GM10248 (cell line): ENCODE measurements at regions of chr6 and their contacts with region 1.

Region 1: DNA sequence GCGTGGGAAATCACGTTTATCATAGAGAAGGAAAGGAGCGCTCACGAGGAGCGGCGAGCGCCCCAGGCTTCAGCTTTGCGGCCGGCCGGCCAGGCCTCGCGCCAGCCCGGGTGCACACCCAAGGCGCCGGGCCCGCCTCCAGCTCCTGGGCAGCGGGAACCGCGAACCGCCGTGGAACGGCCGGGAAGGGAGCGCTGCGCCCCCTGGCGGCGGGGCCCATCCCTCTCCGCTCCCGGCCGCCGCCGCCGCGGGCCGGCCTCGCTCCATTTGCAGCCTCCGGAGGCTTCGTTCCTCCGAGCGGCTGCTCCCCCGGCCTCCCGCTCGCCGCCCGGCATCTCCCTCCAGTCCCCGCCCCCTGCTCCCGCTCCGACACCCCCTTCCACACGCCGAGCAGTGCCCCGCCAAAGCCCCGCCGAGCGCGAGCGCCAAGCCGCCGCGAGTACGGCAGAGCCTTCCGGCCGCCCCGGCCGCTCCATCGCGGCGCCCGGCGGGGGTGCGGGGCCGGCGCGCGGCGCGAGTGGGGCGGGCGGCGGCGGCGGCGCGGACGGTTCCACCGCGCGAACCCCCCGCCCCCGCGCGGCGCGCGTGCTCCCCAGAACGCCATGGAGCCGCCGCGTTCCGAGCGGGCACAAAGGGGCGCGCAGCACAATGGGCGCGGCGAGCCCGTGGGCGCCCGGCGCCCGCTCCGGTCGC is 956 bp downstream of the BEND3 start:
- DNase-seq: peak; percentile 89
- CTCF ChIP-seq: peak; percentile 82

Region 2: DNA sequence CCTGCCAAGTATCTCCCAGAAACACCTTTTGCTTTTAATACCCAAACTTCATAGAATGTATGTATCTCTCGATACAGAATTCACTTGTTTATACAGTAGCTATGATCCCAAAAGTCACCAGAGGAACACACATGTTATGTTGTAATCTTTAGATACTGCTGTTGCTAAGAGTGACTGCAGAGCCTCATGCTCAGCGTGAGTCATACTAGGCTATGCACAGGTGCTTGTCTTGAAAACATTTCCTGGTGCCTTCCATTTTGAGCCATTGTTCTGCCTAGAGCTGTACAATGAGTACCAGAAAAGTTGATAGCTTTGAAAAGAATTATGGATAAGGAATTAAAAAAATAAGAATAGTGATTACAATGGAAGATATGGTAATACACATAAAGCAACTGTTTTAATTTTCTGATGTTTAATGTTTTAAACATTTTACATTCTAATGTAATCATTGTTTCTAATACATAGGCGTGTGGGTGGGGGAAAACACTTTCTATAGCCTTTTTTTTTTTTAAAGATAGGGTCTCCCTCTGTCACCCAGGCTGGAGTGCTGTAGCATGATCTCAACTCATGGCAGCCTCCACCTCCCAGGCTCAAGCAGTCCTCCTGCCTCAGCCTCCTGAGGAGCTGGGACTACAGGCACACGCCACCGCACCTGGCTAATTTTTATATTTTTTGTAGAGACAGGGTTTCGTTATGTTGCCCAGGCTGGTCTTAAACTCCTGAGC is 219.2 kb before region 1 on chr6:
- CTCF ChIA-PET with region 1: no interaction called
- POLR2A ChIA-PET with region 1: no interaction called
- DNase-seq: no peak
- CTCF ChIP-seq: no peak

Region 3: GRCh38 chr6:107021446-107022185 is 92.7 kb before region 1 on chr6:
- CTCF ChIA-PET with region 1: no interaction called
- POLR2A ChIA-PET with region 1: no interaction called
- DNase-seq: no peak
- CTCF ChIP-seq: no peak

Region 4: DNA sequence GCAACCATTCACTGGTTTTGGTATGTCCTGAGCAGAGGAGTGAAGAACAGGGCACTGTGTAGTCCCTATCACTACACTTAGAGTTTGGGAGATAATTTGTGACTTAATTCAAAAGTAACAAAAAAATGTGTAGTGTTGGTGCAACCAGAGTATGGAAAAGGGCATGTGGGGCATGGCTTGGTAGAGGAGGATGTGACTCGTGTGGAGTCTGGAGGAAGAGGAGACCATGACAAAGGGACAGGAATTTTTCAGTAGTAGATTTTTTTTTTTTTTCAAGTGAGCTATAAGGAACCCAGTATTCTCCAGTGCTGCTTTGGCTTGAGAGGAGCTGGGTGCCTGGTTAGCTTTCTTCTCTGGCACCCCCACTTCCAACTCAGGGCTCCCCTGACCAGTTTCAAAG is 81.2 kb before region 1 on chr6:
- CTCF ChIA-PET with region 1: interaction called, 27 read pairs
- POLR2A ChIA-PET with region 1: no interaction called
- DNase-seq: no peak
- CTCF ChIP-seq: no peak

Region 5: DNA sequence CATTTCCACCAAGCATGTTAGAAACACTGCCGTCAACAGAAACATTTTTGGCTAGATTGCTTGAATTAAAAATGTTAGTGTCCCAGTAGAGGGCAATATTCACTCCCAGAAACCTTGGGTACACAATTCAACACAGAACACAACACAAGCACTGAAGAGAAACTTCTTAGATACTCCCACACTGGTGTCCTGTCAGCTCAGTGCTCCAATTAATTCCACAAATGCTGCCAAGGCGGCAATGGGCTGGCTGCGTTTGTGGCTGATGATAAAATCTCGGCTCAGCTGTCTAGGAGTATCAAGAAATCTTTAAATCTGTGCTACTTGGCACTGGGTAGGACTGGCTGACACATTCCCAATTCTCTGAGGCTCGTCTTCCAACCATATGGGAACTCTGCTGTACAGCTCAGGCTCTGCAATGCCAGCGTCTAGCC is 38.4 kb before region 1 on chr6:
- CTCF ChIA-PET with region 1: interaction called, 18 read pairs
- POLR2A ChIA-PET with region 1: no interaction called
- DNase-seq: peak; percentile 41
- CTCF ChIP-seq: peak; percentile 37

Region 6: GRCh38 chr6:107083047-107083768 is 31.2 kb before region 1 on chr6:
- CTCF ChIA-PET with region 1: interaction called, 20 read pairs
- POLR2A ChIA-PET with region 1: interaction called, 3 read pairs
- DNase-seq: no peak
- CTCF ChIP-seq: no peak

Region 7: GRCh38 chr6:107093644-107094043 is 20.7 kb before region 1 on chr6:
- CTCF ChIA-PET with region 1: interaction called, 22 read pairs
- POLR2A ChIA-PET with region 1: no interaction called
- DNase-seq: no peak
- CTCF ChIP-seq: no peak

Region 8: GRCh38 chr6:107102414-107102990 is 11.9 kb before region 1 on chr6:
- CTCF ChIA-PET with region 1: interaction called, 35 read pairs
- POLR2A ChIA-PET with region 1: no interaction called
- DNase-seq: no peak
- CTCF ChIP-seq: no peak

Region 9: DNA sequence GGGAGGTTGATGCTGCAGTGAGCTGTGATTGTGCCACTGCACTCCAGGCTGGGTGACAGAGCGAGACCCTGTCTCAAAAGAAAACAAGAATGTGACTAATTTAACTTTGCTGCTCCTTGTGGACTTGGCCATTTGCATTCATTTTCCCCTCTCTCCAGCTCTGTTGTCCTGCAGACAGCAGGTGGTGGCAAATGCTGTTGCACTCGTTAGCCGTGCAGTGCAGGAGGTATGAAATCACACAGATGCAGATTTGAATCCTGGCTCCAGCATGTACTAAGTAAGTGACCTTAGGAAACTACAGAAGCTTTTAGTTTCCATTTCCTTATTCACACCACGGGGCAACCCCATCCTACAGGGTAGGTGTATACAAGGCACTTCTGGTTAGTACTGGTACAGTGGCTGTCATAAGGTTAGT is 10.6 kb after region 1 on chr6:
- CTCF ChIA-PET with region 1: interaction called, 11 read pairs
- POLR2A ChIA-PET with region 1: interaction called, 3 read pairs
- DNase-seq: no peak
- CTCF ChIP-seq: no peak

Region 10: GRCh38 chr6:107218142-107218541 is 103.8 kb after region 1 on chr6:
- CTCF ChIA-PET with region 1: no interaction called
- POLR2A ChIA-PET with region 1: no interaction called
- DNase-seq: no peak
- CTCF ChIP-seq: no peak